Endothelial cell of umbilical vein (primary cell): ENCODE measurements at regions of chr5 and their contacts with region 1.

Region 1: GRCh38 chr5:15948190-15948589 is 231.4 kb downstream of the MARCHF11 start:
- DNase-seq: peak; percentile 55
- H3K4me3 ChIP-seq: no peak overlapping the region
- H3K27ac ChIP-seq: no peak overlapping the region
- H3K4me1 ChIP-seq: no peaks in the 10 kb centered on the region
- H3K27me3 ChIP-seq: no peaks in the 10 kb centered on the region
- CTCF ChIP-seq: peak in 1 of 2 donors; percentile 22
- POLR2A ChIP-seq: no peak

Region 2: DNA sequence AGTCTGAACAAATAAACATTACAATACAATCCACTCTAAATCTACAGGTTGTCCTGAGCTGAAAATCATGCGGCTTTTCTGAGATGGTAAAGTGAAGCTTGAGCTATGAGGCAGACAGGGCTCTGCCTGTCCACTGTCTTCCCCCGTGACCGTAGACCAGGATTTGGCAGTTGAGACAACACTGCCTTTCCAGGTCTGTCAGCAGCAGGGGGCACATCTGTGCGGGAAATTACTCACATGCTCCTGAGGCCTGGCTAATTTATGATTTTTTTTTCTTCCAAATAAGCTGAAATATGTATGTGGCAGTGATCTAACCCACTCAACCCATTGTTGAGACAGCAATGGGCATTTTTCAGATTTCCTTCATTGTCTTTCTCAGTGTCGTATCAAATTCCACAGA is 140.3 kb before region 1 on chr5:
- CTCF ChIA-PET with region 1: interaction called, 10 read pairs
- POLR2A ChIA-PET with region 1: no interaction called
- dilution Hi-C with region 1: no loop called
- intact Hi-C with region 1: no loop called
- DNase-seq: peak; percentile 90
- H3K4me3 ChIP-seq: no peak overlapping the region
- H3K27ac ChIP-seq: peak overlapping the region; percentile 35
- H3K4me1 ChIP-seq: peaks cover 15% of the 10 kb centered on the region
- H3K27me3 ChIP-seq: no peaks in the 10 kb centered on the region
- CTCF ChIP-seq: peak; percentile 33 to 47
- POLR2A ChIP-seq: no peak